ACHN (cell line): ENCODE measurements at regions of chr12 and their contacts with region 1.

Region 1: DNA sequence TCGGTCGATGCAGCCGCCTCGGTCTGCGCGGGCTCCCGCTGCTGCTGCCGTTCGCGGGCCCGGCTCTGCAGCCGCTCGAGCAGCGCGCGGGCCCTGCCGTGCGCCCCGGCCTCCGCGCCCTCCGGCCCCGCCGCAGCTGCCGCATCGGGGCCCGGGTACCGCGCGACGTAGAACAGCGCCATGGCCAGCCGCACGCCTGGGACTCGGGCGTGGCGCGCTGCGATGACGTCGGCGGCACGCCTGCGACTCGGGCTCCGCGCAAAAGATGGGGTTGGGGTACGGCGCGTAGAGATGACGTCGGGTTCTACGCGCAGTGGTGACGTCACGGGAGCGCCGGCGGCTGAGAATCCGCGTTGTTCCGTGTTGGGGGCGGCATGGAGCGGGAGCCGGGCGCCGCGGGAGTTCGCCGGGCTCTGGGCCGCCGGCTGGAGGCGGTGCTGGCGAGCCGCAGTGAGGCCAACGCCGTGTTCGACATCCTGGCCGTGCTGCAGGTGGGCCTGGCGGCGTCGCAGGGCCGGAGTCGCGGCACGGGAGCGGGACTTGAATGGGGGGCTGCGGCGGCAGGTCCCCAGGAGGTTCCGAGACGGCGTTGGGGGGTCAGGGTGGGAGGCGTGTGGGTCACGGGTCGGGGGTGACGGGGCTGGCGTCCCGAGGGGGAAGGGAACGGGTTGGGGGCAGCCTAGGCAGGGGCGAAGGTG is at the starts of genes DDX51 and NOC4L:
- DNase-seq: peak; percentile 98

Region 2: GRCh38 chr12:131980260-131980659 is 164.0 kb before region 1 on chr12:
- in situ Hi-C with region 1: no loop called
- DNase-seq: peak; percentile 30

Region 3: DNA sequence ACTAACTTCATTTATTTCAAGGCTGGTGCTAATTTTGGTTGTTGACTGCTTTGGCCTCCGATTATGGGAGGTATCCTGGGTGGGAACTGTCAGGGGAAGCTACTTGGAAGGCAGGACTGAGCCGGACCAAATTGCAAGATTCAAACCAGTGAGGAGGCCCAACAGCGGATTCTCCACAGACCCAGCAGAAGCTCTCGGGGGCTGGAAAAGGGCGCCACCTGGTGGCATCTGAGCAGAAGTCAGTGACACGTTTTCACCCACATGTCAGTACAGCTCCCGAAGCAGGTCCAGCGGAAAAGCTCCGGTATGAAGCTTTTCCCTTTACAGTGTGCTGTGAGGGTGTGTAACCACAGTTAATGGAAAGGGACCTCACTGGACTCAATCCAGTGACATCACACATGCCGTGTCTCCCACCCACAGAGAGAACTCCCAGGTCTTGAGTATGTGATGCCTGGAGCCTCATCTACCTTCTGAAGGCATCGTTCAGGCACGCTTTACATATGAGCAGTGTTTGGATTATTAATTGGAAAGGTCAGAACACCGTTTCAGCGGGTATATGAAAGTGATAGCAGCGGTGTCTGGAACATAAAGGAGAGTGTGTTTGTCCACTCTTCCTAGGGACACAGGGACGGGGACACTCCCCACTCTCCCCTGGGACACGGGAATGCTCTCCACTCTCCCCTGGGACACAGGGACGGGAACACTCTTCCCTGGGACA is 470.8 kb after region 1 on chr12:
- in situ Hi-C with region 1: loop called (anchors 25 kb)
- DNase-seq: peak; percentile 85